ENCODE measurements at regions of chr4 and their contacts with region 1.

Region 1: GRCh38 chr4:36979533-36979932 is 265.0 kb upstream of the NWD2 start:
- DNase-seq: no peak
- H3K4me3 ChIP-seq: no peak overlapping the region
- H3K27ac ChIP-seq: no peak overlapping the region
- H3K4me1 ChIP-seq: no peaks in the 10 kb centered on the region
- H3K27me3 ChIP-seq: no peaks in the 10 kb centered on the region
- CTCF ChIP-seq: no peak
- EP300 ChIP-seq: no peak
- POLR2A ChIP-seq: no peak

Region 2: DNA sequence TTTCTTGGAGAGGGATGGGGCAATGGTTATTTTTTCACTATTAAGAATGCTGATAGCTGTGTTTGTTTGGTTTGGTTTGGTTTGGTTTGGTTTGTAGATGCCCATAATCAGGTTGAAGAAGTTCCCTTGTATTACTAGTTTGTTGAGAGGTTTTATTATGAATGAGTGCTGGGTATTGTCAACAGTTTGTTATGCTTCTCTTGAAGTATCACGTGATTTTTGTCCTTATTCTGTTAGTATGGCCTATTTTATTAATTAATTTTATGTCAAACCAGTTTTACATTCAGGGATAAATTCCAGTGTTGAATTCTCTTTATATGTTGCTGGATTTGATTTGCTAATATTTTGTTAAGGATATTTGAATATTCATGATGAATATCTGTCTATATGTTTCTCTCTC is 184.8 kb before region 1 on chr4:
- intact Hi-C with region 1: no loop called
- DNase-seq: no peak
- H3K4me3 ChIP-seq: no peak overlapping the region
- H3K27ac ChIP-seq: no peak overlapping the region
- H3K4me1 ChIP-seq: no peaks in the 10 kb centered on the region
- H3K27me3 ChIP-seq: no peaks in the 10 kb centered on the region
- CTCF ChIP-seq: no peak
- EP300 ChIP-seq: no peak
- POLR2A ChIP-seq: no peak

Region 3: GRCh38 chr4:36990128-36990872 is 10.8 kb after region 1 on chr4:
- intact Hi-C with region 1: loop called (anchors 1 kb)
- DNase-seq: no peak
- H3K4me3 ChIP-seq: no peak overlapping the region
- H3K27ac ChIP-seq: no peak overlapping the region
- H3K4me1 ChIP-seq: no peaks in the 10 kb centered on the region
- H3K27me3 ChIP-seq: no peaks in the 10 kb centered on the region
- CTCF ChIP-seq: no peak
- EP300 ChIP-seq: no peak
- POLR2A ChIP-seq: no peak

Region 4: DNA sequence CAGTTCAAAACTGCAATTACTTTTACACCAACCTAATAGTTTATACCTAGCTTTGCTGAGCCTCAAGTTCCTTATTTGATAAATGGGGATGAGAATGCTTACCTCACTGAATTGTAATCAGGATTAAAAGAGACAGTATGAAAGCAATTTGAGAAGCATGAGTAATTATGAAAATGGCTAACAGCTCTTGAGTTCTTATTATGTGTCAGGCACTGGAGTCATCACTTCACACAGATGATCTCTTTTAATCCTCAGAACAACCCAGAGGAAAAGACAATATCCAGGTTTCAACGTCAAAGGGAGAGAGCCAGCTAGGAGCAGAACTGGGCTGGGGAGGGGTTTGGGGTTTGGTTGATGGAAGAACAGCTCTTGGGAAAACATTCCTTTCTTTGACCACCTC is 44.0 kb after region 1 on chr4:
- intact Hi-C with region 1: no loop called
- DNase-seq: no peak
- H3K4me3 ChIP-seq: no peak overlapping the region
- H3K27ac ChIP-seq: no peak overlapping the region
- H3K4me1 ChIP-seq: no peaks in the 10 kb centered on the region
- H3K27me3 ChIP-seq: no peaks in the 10 kb centered on the region
- CTCF ChIP-seq: no peak
- EP300 ChIP-seq: no peak
- POLR2A ChIP-seq: no peak

Region 5: GRCh38 chr4:37124800-37125199 is 145.3 kb after region 1 on chr4:
- intact Hi-C with region 1: no loop called
- DNase-seq: no peak
- H3K4me3 ChIP-seq: no peak overlapping the region
- H3K27ac ChIP-seq: no peak overlapping the region
- H3K4me1 ChIP-seq: no peaks in the 10 kb centered on the region
- H3K27me3 ChIP-seq: no peaks in the 10 kb centered on the region
- CTCF ChIP-seq: no peak
- EP300 ChIP-seq: no peak
- POLR2A ChIP-seq: no peak

Measured in esophagus muscularis mucosa (tissue), 4 donors.